Colonic mucosa (tissue), 4 donors: ENCODE measurements at regions of chr6 and their contacts with region 1.

Region 1: DNA sequence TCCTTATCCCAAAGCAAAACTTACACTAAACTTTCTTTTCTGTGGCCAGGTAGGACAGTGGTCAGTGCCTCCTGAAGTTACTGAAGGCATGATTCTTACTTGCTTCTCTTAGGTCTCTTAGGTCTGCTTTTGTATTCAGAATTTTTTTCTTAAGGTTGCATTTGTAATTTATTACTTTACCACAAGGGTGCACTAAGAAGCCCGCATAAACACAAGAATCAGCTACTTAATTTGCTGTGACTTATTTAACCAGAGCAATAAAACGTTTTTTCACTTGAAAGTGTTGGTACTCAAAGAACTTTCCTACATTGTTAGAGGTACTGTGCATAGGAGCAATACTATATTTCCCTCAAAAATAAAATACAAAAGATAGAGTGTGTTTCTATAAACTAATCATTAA is 75.4 kb upstream of the LAMA2 start:
- DNase-seq: no peak
- H3K4me3 ChIP-seq: no peak overlapping the region
- H3K27ac ChIP-seq: no peak overlapping the region
- H3K4me1 ChIP-seq: no peaks in the 10 kb centered on the region
- H3K27me3 ChIP-seq: no peaks in the 10 kb centered on the region
- CTCF ChIP-seq: no peak

Region 2: GRCh38 chr6:128630182-128630581 is 177.4 kb before region 1 on chr6:
- intact Hi-C with region 1: no loop called
- DNase-seq: no peak
- H3K4me3 ChIP-seq: no peak overlapping the region
- H3K27ac ChIP-seq: no peak overlapping the region
- H3K4me1 ChIP-seq: no peaks in the 10 kb centered on the region
- H3K27me3 ChIP-seq: no peaks in the 10 kb centered on the region
- CTCF ChIP-seq: no peak

Region 3: GRCh38 chr6:129370268-129370916 is 562.8 kb after region 1 on chr6:
- intact Hi-C with region 1: loop called (anchors 2 kb)
- DNase-seq: peak; percentile 64
- H3K4me3 ChIP-seq: no peak overlapping the region
- H3K27ac ChIP-seq: no peak overlapping the region
- H3K4me1 ChIP-seq: no peaks in the 10 kb centered on the region
- H3K27me3 ChIP-seq: no peaks in the 10 kb centered on the region
- CTCF ChIP-seq: peak; percentile 55